ENCODE measurements at regions of chr10 and their contacts with region 1.

Region 1: DNA sequence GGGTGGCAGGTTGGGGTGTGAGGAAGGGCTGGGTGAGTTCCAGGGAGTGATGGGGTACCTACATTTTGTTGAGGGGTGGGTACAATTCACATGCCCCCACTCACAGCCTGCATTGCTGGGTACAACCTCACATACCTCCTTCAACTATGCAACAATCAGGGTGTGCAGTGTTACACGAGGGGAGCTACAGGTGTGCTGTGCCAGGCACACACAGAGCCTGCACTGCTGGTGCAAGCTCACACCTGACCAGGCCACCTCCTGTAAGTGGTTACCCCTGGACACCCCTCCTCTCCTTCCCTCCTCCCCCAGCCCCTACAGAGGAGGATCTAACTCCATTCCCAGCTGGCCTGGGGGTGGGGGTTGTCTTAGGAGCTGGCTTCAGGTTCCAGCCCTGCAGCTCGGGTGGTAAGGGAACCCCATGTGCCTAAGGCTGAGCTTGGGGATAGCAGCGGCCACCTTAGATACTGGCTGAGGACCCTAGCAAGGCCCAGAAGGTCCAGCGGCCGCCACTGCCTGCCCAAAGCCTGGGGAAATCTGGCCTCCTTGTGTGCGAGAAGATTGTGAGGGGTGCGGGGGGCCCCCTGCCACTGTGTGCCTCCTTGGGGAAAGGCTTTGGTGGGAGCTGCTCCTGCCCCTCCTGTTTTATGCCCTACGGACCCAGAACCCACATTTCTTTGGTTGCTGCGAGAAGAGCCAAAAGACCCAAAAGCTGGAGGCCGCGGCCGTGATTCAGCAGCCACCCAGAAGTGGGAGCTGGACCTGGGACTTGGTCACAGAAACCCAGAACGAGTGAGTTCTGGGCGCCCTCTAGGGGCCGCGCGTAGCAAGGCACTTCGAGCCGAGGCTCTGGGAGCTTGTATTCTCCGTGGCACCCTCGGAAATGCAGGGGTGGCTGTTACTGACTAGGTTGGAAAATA is 10.8 kb downstream of the TLX1 start:
- DNase-seq: peak; percentile 82 to 94
- ATAC-seq: peak; percentile 87 to 96
- H3K4me3 ChIP-seq: no peak overlapping the region
- H3K27ac ChIP-seq: peak overlapping the region; percentile 53 to 83
- H3K4me1 ChIP-seq: 0 out of 3 replicates have a peak, but pooled peaks cover 3% of the 10 kb centered on the region
- CTCF ChIP-seq: peak; percentile 94
- EP300 ChIP-seq: no peak
- POLR2A ChIP-seq: no peak
- RAD21 ChIP-seq: peak; percentile 91 to 92

Region 2: DNA sequence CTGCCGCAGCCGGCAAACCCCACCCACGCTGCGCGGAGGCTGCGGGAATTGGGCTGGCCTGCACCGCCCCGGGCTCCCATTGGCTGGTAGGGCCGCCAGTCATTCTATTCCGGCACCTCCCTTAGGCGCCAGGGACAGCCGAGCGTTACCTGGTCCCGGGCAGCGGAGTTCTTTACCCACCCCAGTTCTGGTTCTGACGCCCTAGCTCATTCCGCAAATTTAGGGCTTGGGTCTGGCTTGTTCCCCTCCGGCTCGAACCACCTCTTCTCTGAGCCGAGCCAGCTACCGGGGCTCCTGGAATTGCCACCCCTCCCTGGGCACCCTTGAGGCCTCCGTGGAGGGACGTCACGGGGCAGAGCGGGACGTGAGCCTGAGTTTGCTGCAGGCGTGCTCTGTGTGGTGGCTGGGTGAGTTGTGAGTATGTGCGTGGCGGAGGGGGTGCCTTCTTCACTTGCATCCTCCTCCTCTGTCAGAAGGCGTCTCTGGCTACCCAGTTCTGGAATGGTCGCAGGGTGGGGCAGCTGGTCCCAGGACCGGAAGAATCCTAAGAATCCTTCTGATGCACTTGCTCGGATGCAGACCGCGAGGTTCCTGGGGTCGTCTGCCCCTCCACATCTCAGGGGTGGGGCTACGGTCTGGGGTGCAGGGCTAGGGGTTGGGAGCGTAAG is 110.6 kb before region 1 on chr10 and contains the starts of genes PDZD7 and SFXN3:
- CTCF ChIA-PET with region 1: interaction called, 24 read pairs
- POLR2A ChIA-PET with region 1: no interaction called
- DNase-seq: peak; percentile 92 to 95
- ATAC-seq: peak; percentile 80 to 93
- H3K4me3 ChIP-seq: peak within 1 kb of the TSS; percentile 77
- H3K27ac ChIP-seq: peak within 1 kb of the TSS; percentile 75 to 92
- H3K4me1 ChIP-seq: peaks cover 27% of the 10 kb centered on the region
- CTCF ChIP-seq: no peak
- EP300 ChIP-seq: no peak
- POLR2A ChIP-seq: peak; percentile 27
- RAD21 ChIP-seq: no peak
- polyA plus RNA-seq, gene PDZD7: 0.20 and 0.21 TPM in 2 replicates
- polyA plus RNA-seq, gene SFXN3: 33.7 and 42.1 TPM in 2 replicates

Region 3: DNA sequence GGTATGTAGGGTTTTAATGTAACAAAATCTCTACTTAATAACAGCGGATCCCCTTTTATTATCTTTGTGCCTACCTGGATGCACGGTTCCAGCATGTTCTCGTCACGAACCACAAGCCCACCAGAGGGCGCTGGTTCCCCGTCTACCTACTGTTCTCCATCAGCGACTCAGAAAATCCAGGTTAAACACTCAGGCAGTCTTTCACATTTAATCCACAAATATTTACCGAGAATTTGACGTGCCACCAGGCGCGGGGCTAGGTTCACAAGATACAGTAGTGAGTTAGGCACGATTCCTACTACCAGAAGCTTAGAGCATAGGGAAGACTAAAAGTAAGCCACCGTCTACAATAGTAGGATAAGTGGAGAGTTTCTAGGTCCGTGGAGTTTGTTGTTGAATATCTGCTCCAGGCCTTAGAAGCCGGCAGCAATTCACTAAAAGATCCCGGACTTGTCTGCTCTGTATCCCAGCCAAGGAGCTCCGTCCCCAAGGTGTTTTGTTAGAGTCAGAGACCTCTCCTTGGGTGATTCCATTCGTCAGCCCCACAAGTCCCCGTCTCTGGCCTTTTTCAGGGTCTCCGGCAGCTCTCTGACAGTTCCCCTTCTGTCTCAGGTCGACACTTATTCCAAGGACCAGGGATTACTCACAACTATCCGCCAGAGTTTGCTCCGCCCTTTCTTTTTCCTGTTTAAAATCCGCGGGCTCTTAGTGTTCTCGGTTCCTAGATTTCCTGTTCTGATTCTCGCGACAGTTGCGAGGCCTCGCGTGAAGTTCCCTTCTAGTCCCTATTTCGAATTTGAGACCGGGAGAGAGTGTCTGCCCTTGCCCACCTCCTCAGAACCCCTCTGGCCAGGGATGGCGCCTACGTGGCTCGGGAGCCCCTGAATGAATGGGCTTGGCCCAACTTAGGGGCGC is 81.6 kb before region 1 on chr10:
- CTCF ChIA-PET with region 1: interaction called, 39 read pairs
- POLR2A ChIA-PET with region 1: interaction called, 4 read pairs
- DNase-seq: peak; percentile 91 to 95
- ATAC-seq: peak; percentile 51 to 80
- H3K4me3 ChIP-seq: peak overlapping the region; percentile 65
- H3K27ac ChIP-seq: peak overlapping the region; percentile 90 to 99
- H3K4me1 ChIP-seq: peaks cover 36% of the 10 kb centered on the region
- CTCF ChIP-seq: peak; percentile 95
- EP300 ChIP-seq: no peak
- POLR2A ChIP-seq: no peak
- RAD21 ChIP-seq: peak; percentile 85 to 87

Region 4: GRCh38 chr10:101080933-101081931 is 60.6 kb before region 1 on chr10:
- CTCF ChIA-PET with region 1: interaction called, 26 read pairs
- POLR2A ChIA-PET with region 1: no interaction called
- DNase-seq: no peak
- ATAC-seq: peak; percentile 23 to 41; a peak in 1 of 6 replicates
- H3K4me3 ChIP-seq: no peak overlapping the region
- H3K27ac ChIP-seq: no peak overlapping the region
- H3K4me1 ChIP-seq: no peaks in the 10 kb centered on the region
- CTCF ChIP-seq: no peak
- EP300 ChIP-seq: no peak
- POLR2A ChIP-seq: no peak
- RAD21 ChIP-seq: no peak

Region 5: GRCh38 chr10:101110856-101111546 is 30.9 kb before region 1 on chr10:
- CTCF ChIA-PET with region 1: interaction called, 35 read pairs
- POLR2A ChIA-PET with region 1: no interaction called
- DNase-seq: no peak
- ATAC-seq: peak; percentile 29 to 52; a peak in 3 of 6 replicates
- H3K4me3 ChIP-seq: no peak overlapping the region
- H3K27ac ChIP-seq: no peak overlapping the region
- H3K4me1 ChIP-seq: peaks cover 10% of the 10 kb centered on the region
- CTCF ChIP-seq: no peak
- EP300 ChIP-seq: no peak
- POLR2A ChIP-seq: no peak
- RAD21 ChIP-seq: no peak

Region 6: DNA sequence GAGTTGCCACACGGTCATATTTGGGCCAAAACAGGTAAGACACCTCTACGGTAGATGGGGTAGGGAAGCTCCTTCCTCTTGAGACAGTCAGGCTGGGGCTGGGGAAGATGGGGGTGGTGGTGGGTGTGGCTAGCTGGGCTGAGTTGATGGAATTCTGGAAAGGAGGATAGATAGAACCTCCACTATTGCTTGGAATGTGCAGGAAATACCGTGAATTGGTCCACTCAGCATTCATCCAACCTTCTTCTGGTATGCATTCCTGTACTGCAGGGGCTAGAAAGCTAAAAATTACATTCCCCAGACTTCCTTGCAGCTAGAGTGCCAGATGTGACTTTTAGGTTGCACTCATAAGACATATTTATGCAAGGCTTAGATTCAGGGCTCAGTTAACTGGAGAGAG is 14.0 kb after region 1 on chr10:
- CTCF ChIA-PET with region 1: interaction called, 61 read pairs
- POLR2A ChIA-PET with region 1: no interaction called
- DNase-seq: no peak
- ATAC-seq: no peak
- H3K4me3 ChIP-seq: no peak overlapping the region
- H3K27ac ChIP-seq: no peak overlapping the region
- H3K4me1 ChIP-seq: 0 out of 3 replicates have a peak, but pooled peaks cover 6% of the 10 kb centered on the region
- CTCF ChIP-seq: no peak
- EP300 ChIP-seq: no peak
- POLR2A ChIP-seq: no peak
- RAD21 ChIP-seq: no peak